Endothelial cell of umbilical vein (primary cell): ENCODE measurements at regions of chr1 and their contacts with region 1.

Region 1: DNA sequence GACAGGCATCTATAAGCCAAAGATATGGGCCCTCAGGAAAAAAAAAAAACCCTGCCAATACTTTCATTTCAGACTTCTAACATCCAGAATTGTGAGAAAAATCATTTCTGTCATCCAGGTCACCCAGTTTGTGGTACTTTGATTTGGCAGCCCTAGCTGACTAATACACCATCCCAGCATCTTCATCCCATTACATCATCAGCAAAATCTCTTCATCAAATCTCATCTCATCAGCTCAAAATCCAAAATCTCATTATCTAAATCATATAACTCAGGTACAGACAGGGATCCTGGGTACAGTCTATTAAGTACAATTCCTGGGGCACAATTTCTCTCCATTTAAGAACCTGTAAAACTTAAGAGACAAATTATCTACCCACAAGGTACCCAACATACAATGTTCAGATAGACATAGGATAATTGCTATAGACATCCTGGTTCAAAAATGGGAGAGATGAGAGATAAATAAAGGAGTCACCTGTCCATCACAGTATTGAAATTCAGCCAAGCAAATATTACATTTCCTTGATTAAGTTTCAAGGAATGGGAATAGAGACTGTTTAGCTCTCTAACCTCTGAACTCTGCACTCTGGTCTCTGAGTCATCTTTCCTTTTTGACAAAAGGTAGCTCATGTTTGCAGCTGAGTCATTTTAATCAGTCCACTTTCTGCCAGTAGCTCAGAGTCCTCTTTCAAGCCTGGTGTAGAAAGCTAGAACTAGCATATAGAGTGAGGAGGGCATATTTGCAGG is 51.7 kb upstream of the GJA8 start:
- DNase-seq: peak; percentile 85
- H3K4me3 ChIP-seq: no peak overlapping the region
- H3K27ac ChIP-seq: peak overlapping the region; percentile 21
- H3K4me1 ChIP-seq: peaks cover 42% of the 10 kb centered on the region
- H3K27me3 ChIP-seq: no peaks in the 10 kb centered on the region
- CTCF ChIP-seq: no peak
- POLR2A ChIP-seq: no peak

Region 2: GRCh38 chr1:147878022-147878421 is 27.1 kb after region 1 on chr1:
- CTCF ChIA-PET with region 1: interaction called, 4 read pairs
- POLR2A ChIA-PET with region 1: no interaction called
- dilution Hi-C with region 1: no loop called
- intact Hi-C with region 1: loop called (anchors 1 kb)
- DNase-seq: peak; percentile 89
- H3K4me3 ChIP-seq: no peak overlapping the region
- H3K27ac ChIP-seq: peak overlapping the region; percentile 73
- H3K4me1 ChIP-seq: peaks cover 28% of the 10 kb centered on the region
- H3K27me3 ChIP-seq: no peaks in the 10 kb centered on the region
- CTCF ChIP-seq: no peak
- POLR2A ChIP-seq: no peak